Activated B cell treated with CpG ODN at 0.5 μM for 24 hours (primary cell): ENCODE measurements at regions of chr11 and their contacts with region 1.

Region 1: GRCh38 chr11:35617687-35618496 is at the start of gene FJX1:
- DNase-seq: peak; percentile 15
- ATAC-seq: peak; percentile 33
- H3K4me3 Mint-ChIP-seq: peak within 1 kb of the TSS; percentile 79
- H3K27ac Mint-ChIP-seq: no peak within 1 kb of the TSS
- H3K4me1 Mint-ChIP-seq: peaks cover 12% of the 10 kb centered on the region
- H3K27me3 Mint-ChIP-seq: peaks cover 47% of the 10 kb centered on the region
- CTCF ChIP-seq: no peak
- total RNA-seq, gene FJX1: 0.49 and 0.73 TPM in 2 replicates

Region 2: GRCh38 chr11:35822815-35823495 is 205.1 kb after region 1 on chr11:
- CTCF ChIA-PET with region 1: interaction called, 12 read pairs
- POLR2A ChIA-PET with region 1: no interaction called
- intact Hi-C with region 1: loop called (anchors 1 kb)
- DNase-seq: no peak
- ATAC-seq: no peak
- H3K4me3 Mint-ChIP-seq: no peak overlapping the region
- H3K27ac Mint-ChIP-seq: no peak overlapping the region
- H3K4me1 Mint-ChIP-seq: peaks cover 11% of the 10 kb centered on the region
- H3K27me3 Mint-ChIP-seq: no peaks in the 10 kb centered on the region
- CTCF ChIP-seq: no peak

Region 3: GRCh38 chr11:36056160-36056751 is 438.4 kb after region 1 on chr11:
- CTCF ChIA-PET with region 1: no interaction called
- POLR2A ChIA-PET with region 1: no interaction called
- intact Hi-C with region 1: no loop called
- DNase-seq: no peak
- ATAC-seq: no peak
- H3K4me3 Mint-ChIP-seq: no peak overlapping the region
- H3K27ac Mint-ChIP-seq: no peak overlapping the region
- H3K4me1 Mint-ChIP-seq: peaks cover 2% of the 10 kb centered on the region
- H3K27me3 Mint-ChIP-seq: peaks cover 9% of the 10 kb centered on the region
- CTCF ChIP-seq: no peak

Region 4: DNA sequence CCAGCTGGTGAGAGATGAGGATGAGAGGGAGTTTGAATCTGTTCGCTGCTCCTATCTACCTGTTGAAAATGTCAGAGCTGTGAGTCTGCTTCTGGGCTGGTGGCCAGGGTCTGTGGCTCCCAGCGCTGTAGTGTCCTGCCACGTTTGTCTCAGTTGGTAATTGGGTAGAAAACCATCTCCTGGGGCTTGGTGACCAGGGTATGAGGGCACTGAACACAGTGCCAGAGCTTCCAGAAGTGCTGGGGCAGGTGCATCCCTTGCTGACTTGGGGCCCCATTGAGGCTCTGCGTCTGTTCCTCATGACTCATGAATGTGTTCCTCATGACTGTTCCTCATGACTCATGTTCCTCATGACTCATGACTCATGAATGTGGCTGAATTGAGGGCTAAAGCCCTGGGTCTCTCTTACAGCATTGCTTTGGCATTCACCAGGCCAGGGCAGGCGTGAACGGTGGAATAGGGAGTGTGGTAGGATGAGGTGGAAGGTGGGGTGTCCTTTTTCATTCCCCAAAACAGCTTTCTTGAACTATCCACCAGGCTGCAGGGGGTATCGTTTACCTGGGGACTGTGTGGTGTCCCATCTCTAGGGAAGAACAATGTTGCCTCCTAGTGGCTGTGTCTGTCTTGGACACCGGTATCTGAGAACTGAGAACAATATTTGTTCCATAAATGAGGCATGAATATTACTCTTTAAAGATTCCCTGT is 531.8 kb after region 1 on chr11:
- CTCF ChIA-PET with region 1: no interaction called
- POLR2A ChIA-PET with region 1: no interaction called
- intact Hi-C with region 1: loop called (anchors 5 kb)
- DNase-seq: no peak
- ATAC-seq: peak; percentile 79
- H3K4me3 Mint-ChIP-seq: no peak overlapping the region
- H3K27ac Mint-ChIP-seq: peak overlapping the region; percentile 70
- H3K4me1 Mint-ChIP-seq: peaks cover 4% of the 10 kb centered on the region
- H3K27me3 Mint-ChIP-seq: peaks cover 2% of the 10 kb centered on the region
- CTCF ChIP-seq: no peak

Region 5: DNA sequence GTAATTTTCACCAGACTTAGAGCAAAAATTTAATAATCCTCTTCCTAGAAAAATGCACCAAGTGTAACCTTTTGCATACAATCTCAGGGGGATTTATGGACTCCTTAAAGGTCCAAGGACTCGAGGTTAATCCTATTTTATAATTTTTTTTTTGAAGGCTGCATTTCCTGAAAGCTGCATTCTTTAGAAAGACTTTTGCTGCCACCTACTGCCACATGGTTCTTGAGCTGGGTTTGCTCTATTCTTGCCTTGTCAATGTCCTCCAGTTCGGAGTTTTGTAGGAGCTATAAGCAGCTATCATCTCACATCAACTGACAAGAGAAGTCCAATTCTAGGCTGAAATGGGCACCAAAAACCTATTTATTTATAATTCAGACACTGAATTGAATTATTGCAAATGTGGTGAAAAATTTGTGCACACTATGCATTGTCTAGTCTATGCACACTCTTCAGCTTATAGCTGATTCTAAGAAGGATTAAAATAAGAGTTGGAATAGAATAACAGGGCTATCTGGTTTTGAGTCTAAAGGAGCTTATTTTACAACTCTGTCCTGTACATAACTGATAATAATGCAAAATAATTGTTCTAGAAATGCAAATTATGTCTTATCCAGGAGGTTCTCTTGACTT is 860.9 kb after region 1 on chr11:
- CTCF ChIA-PET with region 1: interaction called, 3 read pairs
- POLR2A ChIA-PET with region 1: no interaction called
- intact Hi-C with region 1: loop called (anchors 1 kb)
- DNase-seq: no peak
- ATAC-seq: no peak
- H3K4me3 Mint-ChIP-seq: no peak overlapping the region
- H3K27ac Mint-ChIP-seq: no peak overlapping the region
- H3K4me1 Mint-ChIP-seq: no peaks in the 10 kb centered on the region
- H3K27me3 Mint-ChIP-seq: no peaks in the 10 kb centered on the region
- CTCF ChIP-seq: no peak

Region 6: DNA sequence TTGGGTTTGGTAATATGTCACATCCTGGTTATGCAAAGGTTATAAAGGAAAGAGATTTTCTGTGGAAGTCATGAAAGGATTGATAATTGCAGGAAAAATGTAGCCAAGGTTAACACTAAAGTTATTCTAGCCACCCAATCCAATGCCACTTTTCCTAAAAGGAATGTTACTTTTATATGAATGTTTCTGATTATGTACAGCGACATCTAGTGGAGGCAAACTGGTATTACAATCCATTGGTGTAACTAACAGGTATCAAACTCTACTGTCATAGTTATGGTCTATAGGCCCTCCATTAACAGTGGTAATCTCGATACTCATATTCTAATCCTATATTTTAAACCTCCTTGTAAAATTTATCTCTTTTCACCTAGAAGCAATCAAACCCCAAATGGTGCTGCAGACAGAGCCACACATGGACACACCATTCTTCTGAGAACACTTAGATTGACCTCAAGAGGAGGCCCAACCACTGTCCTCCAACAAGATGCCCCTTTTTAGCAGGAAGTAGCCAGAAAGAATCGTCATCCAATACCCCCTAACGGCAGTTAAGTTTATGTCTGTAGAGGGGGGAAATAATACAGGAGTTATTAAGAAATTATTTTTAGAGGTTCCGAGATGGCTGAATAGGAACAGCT is 1055.0 kb after region 1 on chr11:
- CTCF ChIA-PET with region 1: no interaction called
- POLR2A ChIA-PET with region 1: no interaction called
- intact Hi-C with region 1: loop called (anchors 2 kb)
- DNase-seq: no peak
- ATAC-seq: no peak
- H3K4me3 Mint-ChIP-seq: no peak overlapping the region
- H3K27ac Mint-ChIP-seq: no peak overlapping the region
- H3K4me1 Mint-ChIP-seq: no peaks in the 10 kb centered on the region
- H3K27me3 Mint-ChIP-seq: peaks cover 5% of the 10 kb centered on the region
- CTCF ChIP-seq: peak; percentile 92